ENCODE measurements at regions of chr16 and their contacts with region 1.

Region 1: GRCh38 chr16:70251629-70252354 is at the start of gene EXOSC6:
- DNase-seq: peak; percentile 92
- H3K4me3 ChIP-seq: peak within 1 kb of the TSS; percentile 60 to 83 (median 65)
- H3K27ac ChIP-seq: peak within 1 kb of the TSS; percentile 51
- H3K4me1 ChIP-seq: no peaks in the 10 kb centered on the region
- H3K27me3 ChIP-seq: no peaks in the 10 kb centered on the region
- CTCF ChIP-seq: peak; percentile 86 to 91
- total RNA-seq, gene EXOSC6: 33.7 to 38.2 TPM

Region 2: GRCh38 chr16:69823831-69824563 is 427.8 kb before region 1 on chr16:
- CTCF ChIA-PET with region 1: no interaction called
- dilution Hi-C with region 1: no loop called
- in situ Hi-C with region 1: no loop called
- intact Hi-C with region 1: no loop called
- DNase-seq: no peak
- H3K4me3 ChIP-seq: no peak overlapping the region
- H3K27ac ChIP-seq: no peak overlapping the region
- H3K4me1 ChIP-seq: peaks cover 7% of the 10 kb centered on the region
- H3K27me3 ChIP-seq: no peaks in the 10 kb centered on the region
- CTCF ChIP-seq: no peak

Region 3: GRCh38 chr16:70324998-70325747 is 73.4 kb after region 1 on chr16:
- CTCF ChIA-PET with region 1: no interaction called
- dilution Hi-C with region 1: no loop called
- in situ Hi-C with region 1: no loop called
- intact Hi-C with region 1: loop called (anchors 2 kb)
- DNase-seq: no peak
- H3K4me3 ChIP-seq: no peak overlapping the region
- H3K27ac ChIP-seq: no peak overlapping the region
- H3K4me1 ChIP-seq: no peaks in the 10 kb centered on the region
- H3K27me3 ChIP-seq: no peaks in the 10 kb centered on the region
- CTCF ChIP-seq: no peak

Region 4: GRCh38 chr16:70576431-70577255 is 324.9 kb after region 1 on chr16:
- CTCF ChIA-PET with region 1: no interaction called
- dilution Hi-C with region 1: no loop called
- in situ Hi-C with region 1: no loop called
- intact Hi-C with region 1: no loop called
- DNase-seq: peak; percentile 86
- H3K4me3 ChIP-seq: no peak overlapping the region
- H3K27ac ChIP-seq: peak overlapping the region; percentile 37
- H3K4me1 ChIP-seq: peaks cover 68% of the 10 kb centered on the region
- H3K27me3 ChIP-seq: no peaks in the 10 kb centered on the region
- CTCF ChIP-seq: no peak